ENCODE measurements at regions of chr1 and their contacts with region 1.

Region 1: DNA sequence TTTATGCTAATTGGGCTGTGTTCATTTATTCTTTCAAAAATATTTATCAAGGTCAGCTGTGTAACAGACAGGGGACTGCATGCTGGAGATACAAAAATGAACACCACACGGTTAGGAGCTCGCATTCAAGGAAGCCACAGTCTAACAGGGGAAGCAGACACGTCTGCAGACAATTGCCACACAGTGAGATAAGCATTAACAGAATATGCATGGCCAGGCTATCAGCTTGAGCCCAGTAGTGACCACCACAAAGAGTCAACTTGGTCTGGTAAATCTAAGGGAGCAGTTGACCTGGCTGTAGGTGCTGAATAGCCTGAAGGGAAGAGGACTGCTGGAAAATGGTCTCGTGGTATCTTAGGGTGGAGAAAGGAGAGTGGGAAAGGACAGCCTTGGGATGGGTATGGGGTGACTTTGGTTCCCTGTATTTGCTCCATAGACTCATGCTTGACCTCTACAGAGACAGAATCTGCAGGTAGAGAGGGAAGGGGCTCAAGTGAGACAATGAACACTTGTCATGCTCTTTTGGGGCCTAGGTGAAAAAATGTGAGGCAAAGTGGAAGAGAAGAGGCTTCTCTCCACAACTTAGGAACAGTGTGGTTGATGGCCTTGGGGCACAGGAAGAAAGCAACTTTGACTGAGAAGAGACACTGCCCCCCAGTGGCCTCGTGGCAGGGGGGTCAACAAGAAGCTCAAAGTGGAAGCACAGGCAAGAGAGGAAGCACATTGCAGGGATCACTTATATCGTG is 7.6 kb upstream of the NPL start:
- DNase-seq: peak; percentile 51
- ATAC-seq: peak; percentile 88
- H3K4me3 ChIP-seq: no peak overlapping the region
- H3K27ac ChIP-seq: no peak overlapping the region
- H3K4me1 ChIP-seq: peaks cover 5% of the 10 kb centered on the region; the same call in 1 of the 2 replicates
- H3K27me3 ChIP-seq: no peaks in the 10 kb centered on the region
- CTCF ChIP-seq: peak; percentile 83 to 95 (median 89)
- EP300 ChIP-seq: no peak
- POLR2A ChIP-seq: no peak
- RAD21 ChIP-seq: peak; percentile 97

Region 2: DNA sequence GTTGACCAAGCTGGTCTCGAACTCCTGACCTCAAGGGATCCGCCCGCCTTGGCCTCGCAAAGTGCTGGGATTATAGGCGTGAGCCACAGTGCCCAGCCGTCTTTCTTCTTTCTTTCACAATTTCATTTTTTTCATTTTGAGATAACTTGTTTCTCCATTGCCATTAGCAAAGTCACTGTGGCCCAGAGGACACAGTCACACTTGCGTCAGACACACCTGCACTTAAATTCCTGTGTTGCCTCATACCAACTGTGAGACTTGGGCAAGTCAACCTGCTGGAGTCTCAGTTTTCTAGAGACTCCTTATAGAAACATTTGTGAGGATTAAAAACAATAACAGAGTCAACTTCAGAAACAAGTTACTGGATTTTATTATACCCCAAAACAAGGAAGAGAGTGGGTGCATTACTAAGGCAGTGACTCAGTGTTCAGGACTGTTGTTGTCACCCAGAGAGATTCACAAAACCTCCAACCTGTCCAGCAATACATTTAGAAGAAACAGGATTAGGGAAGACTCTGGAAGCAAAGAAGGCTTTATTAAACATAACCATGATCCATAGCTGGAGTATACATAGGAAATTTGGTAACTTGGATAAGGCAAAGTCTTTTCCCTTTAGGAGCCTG is 384.1 kb before region 1 on chr1:
- CTCF ChIA-PET with region 1: interaction called, 17 read pairs
- POLR2A ChIA-PET with region 1: no interaction called
- RAD21 ChIA-PET with region 1: no interaction called
- SMC1A ChIA-PET with region 1: interaction called, 7 read pairs
- in situ Hi-C with region 1: no loop called
- intact Hi-C with region 1: loop called (anchors 5 kb)
- DNase-seq: no peak
- ATAC-seq: no peak
- H3K4me3 ChIP-seq: no peak overlapping the region
- H3K27ac ChIP-seq: no peak overlapping the region
- H3K4me1 ChIP-seq: no peaks in the 10 kb centered on the region
- H3K27me3 ChIP-seq: no peaks in the 10 kb centered on the region
- CTCF ChIP-seq: no peak
- EP300 ChIP-seq: no peak
- POLR2A ChIP-seq: no peak
- RAD21 ChIP-seq: no peak

Region 3: GRCh38 chr1:182604169-182605164 is 177.5 kb before region 1 on chr1 and contains the start of gene RGS16:
- CTCF ChIA-PET with region 1: interaction called, 1,888 read pairs
- POLR2A ChIA-PET with region 1: interaction called, 34 read pairs
- RAD21 ChIA-PET with region 1: interaction called, 946 read pairs
- SMC1A ChIA-PET with region 1: interaction called, 1,145 read pairs
- in situ Hi-C with region 1: loop called (anchors 5 kb)
- intact Hi-C with region 1: loop called (anchors 1 kb)
- DNase-seq: peak; percentile 61
- ATAC-seq: peak; percentile 91
- H3K4me3 ChIP-seq: peak within 1 kb of the TSS; percentile 85
- H3K27ac ChIP-seq: peak within 1 kb of the TSS; percentile 54
- H3K4me1 ChIP-seq: peaks cover 25% of the 10 kb centered on the region
- H3K27me3 ChIP-seq: no peaks in the 10 kb centered on the region
- CTCF ChIP-seq: no peak
- EP300 ChIP-seq: 0 out of 4 replicates have a peak, but pooled peaks of 1 of the 2 experiments have one; percentile 16
- POLR2A ChIP-seq: peak; percentile 100
- RAD21 ChIP-seq: no peak
- polyA plus RNA-seq, gene RGS16: 16.4 to 18.5 TPM

Region 4: GRCh38 chr1:182643706-182644105 is 138.3 kb before region 1 on chr1:
- CTCF ChIA-PET with region 1: interaction called, 61 read pairs
- POLR2A ChIA-PET with region 1: interaction called, 3 read pairs
- RAD21 ChIA-PET with region 1: interaction called, 22 read pairs
- SMC1A ChIA-PET with region 1: interaction called, 49 read pairs
- in situ Hi-C with region 1: no loop called
- intact Hi-C with region 1: no loop called
- DNase-seq: no peak
- ATAC-seq: peak; percentile 78
- H3K4me3 ChIP-seq: no peak overlapping the region
- H3K27ac ChIP-seq: peak overlapping the region; percentile 57
- H3K4me1 ChIP-seq: peaks cover 21% of the 10 kb centered on the region
- H3K27me3 ChIP-seq: no peaks in the 10 kb centered on the region
- CTCF ChIP-seq: no peak
- EP300 ChIP-seq: no peak
- POLR2A ChIP-seq: no peak
- RAD21 ChIP-seq: no peak

Region 5: DNA sequence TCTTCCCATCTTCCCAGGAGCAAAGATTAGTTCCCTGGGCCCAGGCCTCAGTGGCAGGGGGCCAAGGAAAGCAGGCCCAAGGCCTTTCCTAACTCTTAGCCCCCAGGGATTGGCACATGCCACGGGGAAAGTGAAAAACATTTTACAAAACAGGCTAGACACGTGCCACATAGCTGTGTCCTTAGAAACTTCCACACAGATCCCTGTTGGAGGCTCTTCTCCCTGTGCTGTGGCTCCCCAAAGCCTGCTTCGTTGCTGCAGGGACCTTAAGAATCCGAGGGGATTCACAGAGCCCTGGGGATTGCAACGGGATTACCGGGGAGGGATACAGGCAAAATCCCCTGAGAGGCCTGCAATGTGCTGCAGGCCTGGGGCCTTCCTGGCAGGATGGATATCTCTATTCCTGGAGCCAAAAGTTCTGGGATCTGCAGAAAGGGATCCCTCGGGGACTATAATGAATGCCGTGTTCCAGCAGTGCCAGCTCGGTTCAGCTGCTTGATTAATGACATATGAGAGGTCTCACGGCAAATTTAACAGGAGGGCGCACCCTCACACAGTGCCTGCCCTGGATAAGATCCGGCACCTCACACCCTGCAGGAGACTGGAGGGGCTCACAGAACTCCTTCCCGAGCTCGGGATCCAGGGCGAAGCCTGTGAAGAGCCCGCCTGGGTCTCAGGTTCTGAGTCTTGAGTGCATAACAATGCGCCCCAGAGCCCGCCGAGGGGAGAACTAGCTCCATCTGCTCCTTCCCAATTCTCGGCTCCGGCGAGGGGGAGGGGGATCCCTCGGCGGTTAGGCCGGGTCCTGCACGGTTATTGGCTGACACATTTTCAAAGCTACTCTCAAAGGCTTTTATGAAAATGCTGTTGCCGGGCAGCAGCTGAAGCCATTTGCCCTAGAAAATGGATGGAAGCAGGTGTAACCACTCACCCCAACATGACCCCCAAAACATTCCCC is 82.3 kb before region 1 on chr1:
- CTCF ChIA-PET with region 1: interaction called, 17 read pairs
- POLR2A ChIA-PET with region 1: no interaction called
- RAD21 ChIA-PET with region 1: no interaction called
- SMC1A ChIA-PET with region 1: interaction called, 3 read pairs
- in situ Hi-C with region 1: no loop called
- intact Hi-C with region 1: no loop called
- DNase-seq: no peak
- ATAC-seq: no peak
- H3K4me3 ChIP-seq: no peak overlapping the region
- H3K27ac ChIP-seq: no peak overlapping the region
- H3K4me1 ChIP-seq: no peaks in the 10 kb centered on the region
- H3K27me3 ChIP-seq: peaks cover 0 to 4% of the 10 kb centered on the region in 2 experiments; a peak in 1 of 4 replicates
- CTCF ChIP-seq: no peak
- EP300 ChIP-seq: no peak
- POLR2A ChIP-seq: no peak
- RAD21 ChIP-seq: no peak

Region 6: DNA sequence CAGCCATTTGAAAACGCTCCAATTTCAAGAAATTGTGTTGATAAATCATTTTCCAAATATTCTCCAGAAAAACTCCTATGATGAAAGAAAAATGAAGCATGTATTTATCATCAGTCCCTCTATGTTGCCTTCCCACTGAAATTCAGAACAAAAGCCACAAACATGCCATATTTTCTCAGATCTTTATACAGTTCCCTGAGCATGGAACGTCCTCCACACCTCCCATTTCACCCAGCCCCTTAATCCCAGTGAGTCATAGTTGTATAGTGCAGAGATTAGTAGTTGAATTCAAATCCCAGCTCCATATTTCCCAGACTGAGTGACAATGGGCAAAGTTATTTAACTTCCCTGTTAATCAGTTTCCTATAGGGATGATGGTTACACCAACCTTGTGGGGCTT is 13.1 kb before region 1 on chr1:
- CTCF ChIA-PET with region 1: interaction called, 30 read pairs
- POLR2A ChIA-PET with region 1: no interaction called
- RAD21 ChIA-PET with region 1: interaction called, 24 read pairs
- SMC1A ChIA-PET with region 1: interaction called, 20 read pairs
- in situ Hi-C with region 1: no loop called
- intact Hi-C with region 1: no loop called
- DNase-seq: no peak
- ATAC-seq: no peak
- H3K4me3 ChIP-seq: no peak overlapping the region
- H3K27ac ChIP-seq: no peak overlapping the region
- H3K4me1 ChIP-seq: no peaks in the 10 kb centered on the region
- H3K27me3 ChIP-seq: no peaks in the 10 kb centered on the region
- CTCF ChIP-seq: no peak
- EP300 ChIP-seq: no peak
- POLR2A ChIP-seq: no peak
- RAD21 ChIP-seq: no peak

Region 7: GRCh38 chr1:182817802-182818201 is 35.8 kb after region 1 on chr1:
- CTCF ChIA-PET with region 1: no interaction called
- POLR2A ChIA-PET with region 1: no interaction called
- RAD21 ChIA-PET with region 1: no interaction called
- SMC1A ChIA-PET with region 1: no interaction called
- in situ Hi-C with region 1: no loop called
- intact Hi-C with region 1: no loop called
- DNase-seq: no peak
- ATAC-seq: peak; percentile 43
- H3K4me3 ChIP-seq: no peak overlapping the region
- H3K27ac ChIP-seq: no peak overlapping the region
- H3K4me1 ChIP-seq: no peaks in the 10 kb centered on the region
- H3K27me3 ChIP-seq: no peaks in the 10 kb centered on the region
- CTCF ChIP-seq: no peak
- EP300 ChIP-seq: no peak
- POLR2A ChIP-seq: no peak
- RAD21 ChIP-seq: no peak

Region 8: DNA sequence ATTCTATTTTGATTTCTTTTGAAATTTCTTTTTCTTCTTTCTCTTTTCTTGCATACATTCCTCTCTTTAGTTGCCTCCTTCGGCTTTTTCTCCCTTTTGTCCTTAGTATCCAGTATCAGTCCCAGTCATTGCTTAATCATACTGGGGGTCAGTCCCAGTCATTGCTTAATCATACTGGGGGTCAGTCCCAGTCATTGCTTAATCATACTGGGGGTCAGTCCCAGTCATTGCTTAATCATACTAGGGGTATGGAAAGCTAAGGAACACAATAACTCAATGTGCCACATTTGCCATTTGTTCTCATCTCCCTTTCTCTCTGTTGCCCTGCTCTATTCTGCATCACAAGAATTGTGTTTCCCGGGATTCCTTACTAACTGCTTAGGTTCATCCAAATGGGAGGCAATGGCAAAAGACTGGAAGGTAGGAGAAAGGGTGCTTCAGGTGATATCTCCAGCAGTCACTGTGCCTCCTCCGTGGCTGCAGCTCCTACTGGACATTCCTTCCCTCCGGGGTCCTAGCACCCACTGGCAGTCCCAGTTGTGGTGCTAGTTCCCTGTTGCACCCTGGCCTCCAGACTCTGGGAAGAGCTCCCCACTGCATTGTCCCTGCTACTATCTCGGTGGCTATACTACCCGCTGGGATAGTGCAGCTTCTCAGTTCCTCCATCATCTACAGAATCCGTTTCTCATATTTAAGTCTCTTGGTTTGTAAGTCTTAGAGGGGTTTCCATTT is 208.6 kb after region 1 on chr1:
- CTCF ChIA-PET with region 1: no interaction called
- POLR2A ChIA-PET with region 1: no interaction called
- RAD21 ChIA-PET with region 1: no interaction called
- SMC1A ChIA-PET with region 1: no interaction called
- in situ Hi-C with region 1: no loop called
- intact Hi-C with region 1: no loop called
- DNase-seq: no peak
- ATAC-seq: no peak
- H3K4me3 ChIP-seq: no peak overlapping the region
- H3K27ac ChIP-seq: no peak overlapping the region
- H3K4me1 ChIP-seq: no peaks in the 10 kb centered on the region
- H3K27me3 ChIP-seq: no peaks in the 10 kb centered on the region; a peak in 1 of 4 replicates
- CTCF ChIP-seq: no peak
- EP300 ChIP-seq: no peak
- POLR2A ChIP-seq: no peak
- RAD21 ChIP-seq: no peak

Region 9: GRCh38 chr1:183080406-183080805 is 298.4 kb after region 1 on chr1:
- CTCF ChIA-PET with region 1: no interaction called
- POLR2A ChIA-PET with region 1: no interaction called
- RAD21 ChIA-PET with region 1: no interaction called
- SMC1A ChIA-PET with region 1: no interaction called
- in situ Hi-C with region 1: no loop called
- intact Hi-C with region 1: no loop called
- DNase-seq: no peak
- ATAC-seq: peak; percentile 34
- H3K4me3 ChIP-seq: no peak overlapping the region
- H3K27ac ChIP-seq: no peak overlapping the region
- H3K4me1 ChIP-seq: 0 out of 2 replicates have a peak, but pooled peaks cover 4% of the 10 kb centered on the region
- H3K27me3 ChIP-seq: no peaks in the 10 kb centered on the region
- CTCF ChIP-seq: no peak
- EP300 ChIP-seq: no peak
- POLR2A ChIP-seq: no peak
- RAD21 ChIP-seq: no peak

Measured in GM12878 (cell line).